H1 (cell line): ENCODE measurements at regions of chr17 and their contacts with region 1.

Region 1: GRCh38 chr17:74368092-74369081 is 1.1 kb downstream of the GPR142 start:
- DNase-seq: peak in 1 of 2 experiments; percentile 90
- H3K4me3 ChIP-seq: no peak overlapping the region
- H3K27ac ChIP-seq: no peak overlapping the region
- H3K4me1 ChIP-seq: peaks cover 0 to 12% (median 7%) of the 10 kb centered on the region in 4 experiments; a peak in 6 of 7 replicates
- H3K27me3 ChIP-seq: no peaks in the 10 kb centered on the region; a peak in 3 of 7 replicates
- CTCF ChIP-seq: peak; percentile 89 to 96 (median 89)
- EP300 ChIP-seq: no peak
- POLR2A ChIP-seq: no peak
- RAD21 ChIP-seq: peak; percentile 75 to 81

Region 2: DNA sequence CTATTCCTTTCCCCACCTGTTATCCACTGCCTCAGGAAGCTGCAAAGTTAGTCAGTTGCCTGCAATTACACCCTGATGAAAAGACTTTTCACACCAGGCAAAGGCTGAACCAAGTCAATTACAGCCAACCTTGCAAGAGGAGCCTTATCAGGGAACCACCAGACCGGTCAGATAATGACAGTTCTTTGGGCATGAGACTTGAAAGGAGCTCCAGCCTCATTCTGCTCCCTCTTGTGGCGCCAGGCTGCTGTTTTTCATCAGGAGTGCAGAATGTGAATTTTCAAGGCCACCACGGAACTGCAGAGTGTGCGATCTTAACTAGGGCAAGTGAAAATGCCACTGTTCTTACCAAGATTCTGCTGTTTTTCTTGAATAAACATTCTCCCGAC is 71.8 kb before region 1 on chr17:
- CTCF ChIA-PET with region 1: interaction called, 64 read pairs
- POLR2A ChIA-PET with region 1: no interaction called
- DNase-seq: peak; percentile 23 to 58
- H3K4me3 ChIP-seq: no peak overlapping the region
- H3K27ac ChIP-seq: no peak overlapping the region
- H3K4me1 ChIP-seq: no peaks in the 10 kb centered on the region
- H3K27me3 ChIP-seq: no peaks in the 10 kb centered on the region; a peak in 1 of 7 replicates
- CTCF ChIP-seq: peak; percentile 60 to 80 (median 76)
- EP300 ChIP-seq: no peak
- POLR2A ChIP-seq: no peak
- RAD21 ChIP-seq: peak; percentile 43 to 70; a peak in 3 of 4 replicates

Region 3: DNA sequence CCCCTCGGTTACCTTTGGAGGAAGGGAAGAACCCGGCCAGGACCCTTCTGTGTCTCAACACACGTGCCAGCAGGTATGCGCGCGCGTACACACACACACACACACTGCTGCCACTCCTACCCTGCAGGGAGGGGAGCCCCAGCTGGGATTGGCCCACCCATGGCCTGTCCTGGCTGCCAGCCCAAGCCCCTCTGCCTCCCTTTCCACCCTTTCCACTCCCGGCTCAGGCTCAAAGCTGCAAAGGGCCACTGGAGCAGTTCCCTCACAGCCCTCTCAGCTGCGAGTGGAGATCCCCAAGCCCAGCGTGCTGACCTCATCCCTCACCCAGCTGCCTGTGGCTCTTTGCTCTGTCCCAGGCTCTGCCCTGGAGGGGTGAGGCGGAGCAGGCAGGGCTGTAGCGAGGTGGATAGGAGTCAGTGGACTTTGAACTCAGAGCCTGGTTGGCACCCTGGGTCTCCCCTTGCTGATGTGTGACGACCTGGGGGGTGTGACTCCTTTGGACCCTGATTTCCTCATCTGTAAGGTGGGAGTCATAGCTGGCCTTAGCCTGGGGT is 27.8 kb before region 1 on chr17:
- CTCF ChIA-PET with region 1: interaction called, 10 read pairs
- POLR2A ChIA-PET with region 1: no interaction called
- DNase-seq: no peak
- H3K4me3 ChIP-seq: no peak overlapping the region
- H3K27ac ChIP-seq: no peak overlapping the region
- H3K4me1 ChIP-seq: peaks cover 0 to 16% (median 9%) of the 10 kb centered on the region in 4 experiments; a peak in 5 of 7 replicates
- H3K27me3 ChIP-seq: no peaks in the 10 kb centered on the region; a peak in 1 of 7 replicates
- CTCF ChIP-seq: no peak
- EP300 ChIP-seq: no peak
- POLR2A ChIP-seq: no peak
- RAD21 ChIP-seq: no peak

Region 4: DNA sequence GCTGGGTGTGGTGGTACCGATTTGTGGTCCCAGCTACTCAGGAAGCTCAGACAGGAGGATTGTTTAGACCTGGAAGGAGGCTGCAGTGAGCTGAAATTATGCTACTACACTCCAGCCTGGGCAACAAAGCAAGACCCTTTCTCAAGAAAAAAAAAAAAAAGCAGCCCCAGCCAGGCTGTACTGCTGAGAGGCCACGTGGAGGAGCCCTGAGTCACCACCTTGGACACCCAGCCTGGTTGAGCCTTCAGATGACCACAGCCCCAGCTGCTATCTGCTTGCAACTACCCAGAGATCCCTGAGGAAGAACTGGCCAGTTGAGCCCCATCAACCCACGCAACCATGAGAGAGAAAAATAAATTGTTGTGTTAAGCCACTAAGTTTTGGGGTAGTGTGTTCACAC is 39.9 kb after region 1 on chr17:
- CTCF ChIA-PET with region 1: interaction called, 11 read pairs
- POLR2A ChIA-PET with region 1: no interaction called
- DNase-seq: no peak
- H3K4me3 ChIP-seq: no peak overlapping the region
- H3K27ac ChIP-seq: no peak overlapping the region
- H3K4me1 ChIP-seq: peaks cover 3 to 23% (median 14%) of the 10 kb centered on the region in 4 experiments
- H3K27me3 ChIP-seq: no peaks in the 10 kb centered on the region
- CTCF ChIP-seq: peak; percentile 14 to 27 (median 15); a peak in 3 of 4 replicates
- EP300 ChIP-seq: no peak
- POLR2A ChIP-seq: no peak
- RAD21 ChIP-seq: peak; percentile 27 to 52; a peak in 3 of 4 replicates

Region 5: GRCh38 chr17:74467221-74467951 is 99.0 kb after region 1 on chr17:
- CTCF ChIA-PET with region 1: interaction called, 19 read pairs
- POLR2A ChIA-PET with region 1: no interaction called
- DNase-seq: no peak
- H3K4me3 ChIP-seq: peak overlapping the region; percentile 27 to 68 (median 39); a peak in 7 of 8 replicates
- H3K27ac ChIP-seq: no peak overlapping the region
- H3K4me1 ChIP-seq: peaks cover 0 to 9% (median 2%) of the 10 kb centered on the region in 4 experiments; a peak in 2 of 7 replicates
- H3K27me3 ChIP-seq: peaks cover 3 to 25% (median 22%) of the 10 kb centered on the region in 4 experiments
- CTCF ChIP-seq: no peak
- EP300 ChIP-seq: no peak
- POLR2A ChIP-seq: no peak
- RAD21 ChIP-seq: no peak

Region 6: DNA sequence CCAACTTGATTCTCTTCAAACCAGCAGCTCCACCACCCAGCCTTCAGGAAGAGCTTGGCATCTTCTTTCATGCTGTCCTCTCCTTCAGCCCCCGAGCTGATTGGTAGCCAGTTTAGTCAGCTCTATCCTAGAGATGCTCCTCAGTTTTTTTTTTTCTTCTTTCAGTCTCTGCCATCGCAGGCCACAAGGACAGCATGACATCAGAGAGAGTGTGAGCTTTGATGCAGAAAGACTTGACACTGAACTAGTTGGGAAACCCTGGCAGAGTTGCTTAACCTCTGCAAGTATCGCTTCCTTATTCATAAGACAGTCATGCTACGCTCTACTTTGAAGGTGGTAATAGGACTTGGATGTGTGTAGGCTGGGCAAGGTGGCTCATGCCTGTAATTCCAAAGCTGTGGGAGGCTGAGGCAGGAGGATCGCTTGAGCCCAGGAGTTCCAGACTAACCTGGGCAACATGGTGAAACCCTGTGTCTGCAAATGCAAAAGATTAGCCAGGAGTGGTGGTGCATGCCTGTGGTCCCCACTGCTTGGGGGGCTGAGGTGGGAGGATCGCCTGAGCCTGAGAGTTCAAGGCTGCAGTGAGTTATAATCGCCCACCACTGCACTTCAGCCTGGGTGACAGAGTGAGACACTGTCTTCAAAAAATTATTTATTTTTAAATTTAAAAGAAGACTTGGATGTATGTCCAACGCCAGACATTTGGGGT is 160.3 kb after region 1 on chr17:
- CTCF ChIA-PET with region 1: interaction called, 13 read pairs
- POLR2A ChIA-PET with region 1: no interaction called
- DNase-seq: no peak
- H3K4me3 ChIP-seq: no peak overlapping the region
- H3K27ac ChIP-seq: no peak overlapping the region
- H3K4me1 ChIP-seq: peaks cover 0 to 4% (median under 1%) of the 10 kb centered on the region in 4 experiments; a peak in 2 of 7 replicates
- H3K27me3 ChIP-seq: peaks cover 0 to 2% (median 0%) of the 10 kb centered on the region in 4 experiments; a peak in 2 of 7 replicates
- CTCF ChIP-seq: no peak
- EP300 ChIP-seq: no peak
- POLR2A ChIP-seq: no peak
- RAD21 ChIP-seq: no peak